Body of pancreas (tissue), 4 donors: ENCODE measurements at regions of chr15 and their contacts with region 1.

Region 1: GRCh38 chr15:84598969-84599368 is 1.8 kb upstream of the ZSCAN2 start:
- DNase-seq: peak; percentile 35 to 61 (median 44)
- ATAC-seq: no peak
- H3K4me3 ChIP-seq: no peak overlapping the region
- H3K27ac ChIP-seq: peak overlapping the region in 1 of 4 donors; percentile 65
- H3K4me1 ChIP-seq: peaks cover 23% of the 10 kb centered on the region
- H3K27me3 ChIP-seq: no peaks in the 10 kb centered on the region
- CTCF ChIP-seq: peak; percentile 27 to 79 (median 64)
- POLR2A ChIP-seq: no peak

Region 2: GRCh38 chr15:84648539-84648938 is 49.6 kb after region 1 on chr15:
- intact Hi-C with region 1: loop called (anchors 10 kb)
- DNase-seq: peak in 2 of 4 donors; percentile 28 to 45
- ATAC-seq: no peak
- H3K4me3 ChIP-seq: no peak overlapping the region
- H3K27ac ChIP-seq: no peak overlapping the region
- H3K4me1 ChIP-seq: peaks cover 33% of the 10 kb centered on the region
- H3K27me3 ChIP-seq: no peaks in the 10 kb centered on the region
- CTCF ChIP-seq: no peak
- POLR2A ChIP-seq: no peak

Region 3: DNA sequence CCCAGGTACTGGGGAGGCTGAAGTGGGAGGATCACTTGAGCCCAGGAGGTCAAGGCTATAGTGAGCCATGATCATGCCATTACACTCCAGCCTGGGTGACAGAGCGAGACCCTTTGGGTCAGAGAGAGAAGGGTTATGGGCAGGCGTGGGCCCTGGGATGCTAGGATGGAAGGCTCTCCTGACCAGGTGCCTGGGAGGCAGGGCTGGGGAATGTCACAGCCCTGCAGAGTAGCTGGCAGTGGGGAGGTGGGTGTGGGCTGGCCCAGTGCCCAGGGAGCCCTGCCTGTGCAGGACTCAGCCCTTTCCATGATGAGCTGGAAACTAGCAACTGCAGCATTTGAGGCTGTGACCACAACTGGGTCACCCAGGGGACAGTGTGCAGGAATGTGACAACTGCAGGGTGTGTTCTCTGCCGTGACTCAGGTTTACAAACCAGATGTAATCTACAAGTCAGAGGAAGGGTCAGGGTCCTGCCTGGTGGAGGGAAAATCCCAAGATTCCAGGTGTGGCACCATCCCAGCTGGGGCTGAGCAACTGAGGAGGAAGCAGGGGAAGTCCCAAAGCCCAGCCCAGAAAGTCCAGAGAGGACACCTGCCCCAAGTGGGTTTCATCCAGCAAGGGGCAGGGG is 330.9 kb after region 1 on chr15:
- intact Hi-C with region 1: loop called (anchors 10 kb)
- DNase-seq: peak; percentile 43 to 72 (median 64)
- ATAC-seq: peak; percentile 65
- H3K4me3 ChIP-seq: no peak overlapping the region
- H3K27ac ChIP-seq: peak overlapping the region in 1 of 4 donors; percentile 45
- H3K4me1 ChIP-seq: peaks cover 14% of the 10 kb centered on the region
- H3K27me3 ChIP-seq: no peaks in the 10 kb centered on the region
- CTCF ChIP-seq: no peak
- POLR2A ChIP-seq: no peak